ENCODE measurements at regions of chr18 and their contacts with region 1.

Region 1: DNA sequence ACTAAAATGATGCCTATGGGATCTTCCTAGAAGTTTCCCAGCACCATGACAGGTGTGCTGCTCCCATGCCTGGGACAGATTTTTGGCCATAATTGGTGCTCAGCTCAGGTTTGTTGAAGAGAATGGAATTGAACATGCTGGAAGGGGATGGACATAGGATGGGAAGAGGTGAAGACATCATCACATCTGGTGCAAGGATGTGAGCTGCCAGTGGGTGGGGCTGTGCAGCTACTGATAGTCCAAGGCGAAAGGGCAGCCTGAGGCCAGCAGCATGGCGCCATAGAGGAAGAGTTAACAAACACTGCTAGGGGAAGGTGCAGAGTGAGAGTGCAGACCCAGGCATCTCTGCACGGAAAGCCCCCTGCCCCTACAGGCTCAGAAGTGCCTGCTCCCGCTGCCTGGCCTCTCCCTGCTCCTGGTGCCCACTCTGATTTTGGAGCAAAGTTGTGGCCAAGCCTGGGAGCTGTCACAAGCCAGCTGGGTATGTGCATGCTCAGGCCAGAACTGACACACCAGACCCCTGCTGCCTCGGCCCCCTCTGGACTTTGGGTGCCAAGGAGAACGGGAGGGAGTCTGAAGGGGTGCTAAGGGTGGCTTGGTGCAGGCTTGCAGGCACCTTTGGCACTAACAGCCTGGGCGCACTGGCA is 178.6 kb downstream of the ZBTB7C start:
- DNase-seq: no peak
- H3K4me3 Mint-ChIP-seq: no peak overlapping the region
- H3K27ac Mint-ChIP-seq: no peak overlapping the region
- H3K4me1 Mint-ChIP-seq: peaks cover 29% of the 10 kb centered on the region
- H3K27me3 Mint-ChIP-seq: peaks cover 8% of the 10 kb centered on the region

Region 2: DNA sequence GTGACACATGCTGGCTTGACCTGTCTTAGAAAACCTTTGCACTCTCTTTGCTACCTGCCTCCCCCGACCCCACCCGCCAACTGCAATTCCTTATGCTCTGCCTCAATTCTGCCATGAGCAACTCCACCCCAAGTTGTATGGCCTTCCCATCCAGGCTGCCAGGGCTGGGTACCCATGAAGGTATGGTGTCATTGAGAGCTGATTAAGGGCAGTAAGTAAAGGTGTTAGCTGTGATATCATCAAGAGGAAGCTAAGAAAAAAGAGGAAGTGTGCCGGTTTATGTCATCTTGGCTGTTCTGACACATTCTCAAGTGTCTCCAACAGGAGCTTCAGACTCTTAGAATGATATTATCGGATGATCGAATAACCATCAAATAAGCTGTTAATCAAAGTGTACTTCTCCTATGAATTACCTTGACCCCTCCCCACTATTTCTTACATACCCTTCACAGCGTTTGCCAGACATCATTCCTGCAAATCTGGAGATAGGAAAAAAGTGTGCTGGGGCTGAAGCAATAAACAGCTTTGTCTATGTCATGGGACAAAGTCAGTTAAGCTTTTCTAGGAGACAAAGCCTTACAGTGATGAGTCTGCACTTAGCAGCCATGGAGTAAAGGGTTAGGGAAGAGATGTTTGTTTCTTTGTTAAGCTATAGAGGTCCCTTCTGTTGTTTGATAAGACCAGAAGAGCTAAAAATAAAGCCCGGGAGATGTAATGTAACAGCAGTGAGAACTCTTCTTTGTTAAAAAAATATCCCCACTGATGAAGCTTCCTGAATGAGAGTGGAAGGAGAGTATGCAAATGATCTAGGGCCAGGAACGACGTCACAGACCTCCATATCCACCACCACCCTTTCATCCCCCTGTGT is 259.7 kb before region 1 on chr18:
- intact Hi-C with region 1: no loop called
- DNase-seq: no peak
- H3K4me3 Mint-ChIP-seq: no peak overlapping the region
- H3K27ac Mint-ChIP-seq: no peak overlapping the region
- H3K4me1 Mint-ChIP-seq: no peaks in the 10 kb centered on the region
- H3K27me3 Mint-ChIP-seq: peaks cover 12% of the 10 kb centered on the region

Region 3: GRCh38 chr18:48106976-48107711 is 123.4 kb before region 1 on chr18:
- intact Hi-C with region 1: no loop called
- DNase-seq: no peak
- H3K4me3 Mint-ChIP-seq: no peak overlapping the region
- H3K27ac Mint-ChIP-seq: no peak overlapping the region
- H3K4me1 Mint-ChIP-seq: no peaks in the 10 kb centered on the region
- H3K27me3 Mint-ChIP-seq: peaks cover 32% of the 10 kb centered on the region

Region 4: GRCh38 chr18:48129621-48130082 is 100.9 kb before region 1 on chr18:
- intact Hi-C with region 1: loop called (anchors 1 kb)
- DNase-seq: no peak
- H3K4me3 Mint-ChIP-seq: no peak overlapping the region
- H3K27ac Mint-ChIP-seq: no peak overlapping the region
- H3K4me1 Mint-ChIP-seq: peaks cover 35% of the 10 kb centered on the region
- H3K27me3 Mint-ChIP-seq: peaks cover 60% of the 10 kb centered on the region

Region 5: GRCh38 chr18:48470484-48471180 is 240.0 kb after region 1 on chr18:
- intact Hi-C with region 1: loop called (anchors 1 kb)
- DNase-seq: no peak
- H3K4me3 Mint-ChIP-seq: no peak overlapping the region
- H3K27ac Mint-ChIP-seq: no peak overlapping the region
- H3K4me1 Mint-ChIP-seq: no peaks in the 10 kb centered on the region
- H3K27me3 Mint-ChIP-seq: peaks cover 15% of the 10 kb centered on the region

Measured in activated T-helper 1 cell treated with anti-CD3 and anti-CD28 coated beads, Interleukin-12 subunit alpha, Interleukin-12 subunit beta, Interleukin-2, Interleukin-4 antibody, amounts not matched to agents 30 ng/mL and 10 ng/mL and 1 ng/mL, durations not matched to agents 14 hours and 24 hours and 36 hours (primary cell).